ENCODE measurements at regions of chr1 and their contacts with region 1.

Region 1: DNA sequence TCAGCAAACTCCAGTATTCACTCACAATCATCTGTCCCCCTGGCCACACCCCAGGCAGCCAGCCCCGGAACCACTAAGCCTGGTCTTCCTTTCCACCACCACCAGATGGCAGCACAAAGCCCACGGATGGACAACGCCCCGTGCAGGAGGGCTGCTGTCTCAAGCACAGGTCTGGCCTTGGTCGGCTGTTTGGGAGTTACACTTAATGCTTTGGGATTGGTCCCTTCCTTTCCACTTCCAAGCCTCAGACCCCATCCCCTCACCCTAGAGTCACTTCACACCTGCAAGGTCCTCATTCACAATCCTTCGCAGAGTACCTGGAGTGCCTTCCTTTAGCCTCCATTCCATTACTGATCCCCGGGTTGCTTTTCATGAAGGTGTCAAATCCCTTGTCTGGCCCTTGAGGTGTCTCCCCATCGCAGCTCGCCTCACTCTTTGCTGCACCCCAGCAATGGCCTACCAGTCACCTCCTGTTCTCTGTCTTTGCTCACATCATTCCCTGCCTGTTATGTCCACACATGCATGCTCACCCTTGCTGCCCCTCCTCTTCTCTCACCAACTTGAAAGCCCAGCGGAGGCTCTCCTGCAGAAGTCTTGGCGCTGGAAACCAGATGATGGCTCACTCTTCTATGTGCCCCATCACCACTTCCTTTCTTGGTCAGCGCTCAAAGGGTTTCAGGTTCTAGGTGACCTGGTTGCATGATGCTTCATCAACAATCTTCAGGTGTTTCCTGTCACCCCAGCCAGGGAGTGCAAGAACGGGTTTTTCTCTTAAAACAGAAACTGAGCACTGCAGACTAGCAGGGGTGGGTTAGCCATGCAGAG is 24.9 kb upstream of the KCNA2 start:
- DNase-seq: peak; percentile 17
- ATAC-seq: peak; percentile 95
- H3K4me3 ChIP-seq: no peak overlapping the region
- H3K27ac ChIP-seq: no peak overlapping the region
- H3K4me1 ChIP-seq: no peaks in the 10 kb centered on the region
- H3K27me3 ChIP-seq: no peaks in the 10 kb centered on the region; the same call in 1 of the 2 replicates
- CTCF ChIP-seq: peak; percentile 79

Region 2: GRCh38 chr1:110130113-110130596 is 500.9 kb before region 1 on chr1:
- CTCF ChIA-PET with region 1: no interaction called
- POLR2A ChIA-PET with region 1: no interaction called
- in situ Hi-C with region 1: no loop called
- intact Hi-C with region 1: no loop called
- DNase-seq: no peak
- ATAC-seq: no peak
- H3K4me3 ChIP-seq: no peak overlapping the region
- H3K27ac ChIP-seq: no peak overlapping the region
- H3K4me1 ChIP-seq: no peaks in the 10 kb centered on the region
- H3K27me3 ChIP-seq: no peaks in the 10 kb centered on the region
- CTCF ChIP-seq: no peak

Region 3: GRCh38 chr1:110766025-110766647 is 135.1 kb after region 1 on chr1:
- CTCF ChIA-PET with region 1: no interaction called
- POLR2A ChIA-PET with region 1: no interaction called
- in situ Hi-C with region 1: no loop called
- intact Hi-C with region 1: loop called (anchors 5 kb)
- DNase-seq: no peak
- ATAC-seq: no peak
- H3K4me3 ChIP-seq: no peak overlapping the region
- H3K27ac ChIP-seq: no peak overlapping the region
- H3K4me1 ChIP-seq: no peaks in the 10 kb centered on the region
- H3K27me3 ChIP-seq: peaks cover 4% of the 10 kb centered on the region; the same call in 1 of the 2 replicates
- CTCF ChIP-seq: peak; percentile 72

Region 4: DNA sequence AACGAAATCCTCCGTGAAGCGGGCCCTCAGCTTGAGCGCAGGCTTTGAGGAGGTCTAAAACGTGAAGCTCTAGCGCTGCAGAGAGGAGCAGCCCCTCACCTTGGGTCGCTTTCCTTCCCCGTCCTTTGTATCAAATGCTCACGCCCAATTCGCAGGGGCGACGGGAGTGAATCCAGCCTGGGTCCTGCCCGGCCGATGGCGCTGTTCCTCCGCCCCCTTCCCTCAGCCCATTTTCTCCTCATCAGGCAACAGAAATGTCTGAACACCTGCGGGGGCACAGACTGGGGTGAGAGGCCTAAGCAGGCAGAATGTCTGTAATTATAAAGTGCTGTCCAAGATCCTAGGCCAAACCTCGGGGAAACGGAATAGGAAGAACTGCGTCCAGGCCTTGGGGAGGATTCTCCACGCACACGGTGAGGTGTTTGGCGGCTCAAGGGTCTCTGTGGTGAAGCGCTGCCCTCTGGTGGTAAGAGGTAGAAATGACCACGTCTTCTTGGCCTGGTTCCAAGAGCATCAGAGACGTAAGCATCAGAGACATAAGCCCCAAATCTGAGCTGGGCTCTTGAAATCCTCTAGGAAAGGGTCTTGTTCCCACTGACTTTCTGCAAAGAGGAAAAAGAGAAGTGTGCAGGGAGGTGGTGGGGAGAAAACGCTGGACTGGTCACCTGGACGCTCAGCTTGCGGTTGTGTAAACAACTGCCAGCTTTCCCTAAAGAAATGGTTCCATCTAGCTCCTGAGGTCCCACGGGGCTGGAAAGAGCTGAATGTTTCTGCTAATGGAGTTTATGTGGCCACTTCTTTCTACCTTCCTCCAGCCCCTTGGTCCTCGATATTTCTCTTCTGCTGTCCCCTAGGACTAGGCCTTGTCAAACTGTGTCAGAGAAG is 149.8 kb after region 1 on chr1:
- CTCF ChIA-PET with region 1: interaction called, 5 read pairs
- POLR2A ChIA-PET with region 1: no interaction called
- in situ Hi-C with region 1: no loop called
- intact Hi-C with region 1: loop called (anchors 5 kb)
- DNase-seq: no peak
- ATAC-seq: peak; percentile 56; the same call in 1 of the 2 replicates
- H3K4me3 ChIP-seq: no peak overlapping the region
- H3K27ac ChIP-seq: no peak overlapping the region
- H3K4me1 ChIP-seq: no peaks in the 10 kb centered on the region
- H3K27me3 ChIP-seq: no peaks in the 10 kb centered on the region
- CTCF ChIP-seq: peak; percentile 78